ENCODE measurements at regions of chr2 and their contacts with region 1.

Region 1: GRCh38 chr2:191020221-191020741 is 6.3 kb upstream of the STAT1 start:
- DNase-seq: peak; percentile 99
- ATAC-seq: peak; percentile 80
- H3K4me3 Mint-ChIP-seq: no peak overlapping the region
- H3K27ac Mint-ChIP-seq: no peak overlapping the region
- H3K4me1 Mint-ChIP-seq: peaks cover 32% of the 10 kb centered on the region
- H3K27me3 Mint-ChIP-seq: no peaks in the 10 kb centered on the region

Region 2: GRCh38 chr2:190880378-190881073 is 139.8 kb before region 1 on chr2 and contains the start of gene GLS:
- POLR2A ChIA-PET with region 1: interaction called, 37 read pairs
- DNase-seq: peak; percentile 94
- ATAC-seq: peak; percentile 80
- H3K4me3 Mint-ChIP-seq: peak within 1 kb of the TSS; percentile 100
- H3K27ac Mint-ChIP-seq: peak within 1 kb of the TSS; percentile 100
- H3K4me1 Mint-ChIP-seq: peaks cover 39% of the 10 kb centered on the region
- H3K27me3 Mint-ChIP-seq: no peaks in the 10 kb centered on the region
- total RNA-seq, gene GLS: 175 to 187 TPM

Region 3: GRCh38 chr2:191066197-191066918 is 46.1 kb after region 1 on chr2:
- POLR2A ChIA-PET with region 1: interaction called, 10 read pairs
- DNase-seq: no peak
- ATAC-seq: peak; percentile 27
- H3K4me3 Mint-ChIP-seq: peak overlapping the region; percentile 88
- H3K27ac Mint-ChIP-seq: peak overlapping the region; percentile 92
- H3K4me1 Mint-ChIP-seq: peaks cover 64% of the 10 kb centered on the region
- H3K27me3 Mint-ChIP-seq: no peaks in the 10 kb centered on the region

Measured in activated naive CD8-positive, alpha-beta T cell treated with anti-CD3 and anti-CD28 coated beads, Interleukin-2, amount 10 ng/mL, durations not matched to agents 7 days and 5 days (primary cell).